ENCODE measurements at regions of chr9 and their contacts with region 1.

Region 1: GRCh38 chr9:116377479-116377779 is 223.8 kb downstream of the PAPPA start:
- DNase-seq: no peak
- ATAC-seq: no peak
- H3K4me3 Mint-ChIP-seq: no peak overlapping the region
- H3K27ac Mint-ChIP-seq: no peak overlapping the region
- H3K4me1 Mint-ChIP-seq: no peaks in the 10 kb centered on the region
- H3K27me3 Mint-ChIP-seq: no peaks in the 10 kb centered on the region

Region 2: GRCh38 chr9:116425244-116425643 is 47.8 kb after region 1 on chr9:
- CTCF ChIA-PET with region 1: no interaction called
- POLR2A ChIA-PET with region 1: no interaction called
- intact Hi-C with region 1: loop called in 1 of 2 experiments (anchors 5 kb)
- DNase-seq: no peak
- ATAC-seq: no peak
- H3K4me3 Mint-ChIP-seq: no peak overlapping the region
- H3K27ac Mint-ChIP-seq: no peak overlapping the region
- H3K4me1 Mint-ChIP-seq: no peaks in the 10 kb centered on the region
- H3K27me3 Mint-ChIP-seq: no peaks in the 10 kb centered on the region